ENCODE measurements at regions of chr2 and their contacts with region 1.

Region 1: GRCh38 chr2:97911206-97911921 is 84.4 kb downstream of the TMEM131 start:
- DNase-seq: peak; percentile 84
- ATAC-seq: peak; percentile 74
- H3K4me3 ChIP-seq: no peak overlapping the region
- H3K27ac ChIP-seq: peak overlapping the region; percentile 64
- H3K4me1 ChIP-seq: peaks cover 60% of the 10 kb centered on the region
- H3K27me3 ChIP-seq: no peaks in the 10 kb centered on the region
- CTCF ChIP-seq: no peak
- EP300 ChIP-seq: peak in 1 of 2 experiments; percentile 86; a peak in 3 of 4 replicates
- POLR2A ChIP-seq: no peak
- RAD21 ChIP-seq: peak; percentile 15; the same call in 1 of the 2 replicates

Region 2: DNA sequence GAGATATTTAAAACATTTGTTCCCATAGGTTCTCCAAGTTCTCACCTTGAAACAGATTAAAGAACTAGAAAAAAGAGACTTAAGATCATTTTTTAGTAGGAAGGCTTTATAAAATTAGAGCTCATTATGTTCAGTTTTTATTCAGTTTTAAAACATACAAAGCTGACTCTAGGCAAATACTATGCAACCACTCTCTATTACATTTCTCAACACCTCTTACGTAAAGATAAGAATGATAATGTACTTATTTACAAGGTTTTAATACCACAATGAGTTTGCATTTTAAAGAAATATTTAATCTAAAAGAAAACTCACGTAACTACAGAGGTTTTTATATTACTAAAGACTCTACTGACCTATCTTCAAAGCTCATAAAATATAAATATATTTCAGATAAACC is 15.6 kb after region 1 on chr2:
- CTCF ChIA-PET with region 1: interaction called, 8 read pairs
- POLR2A ChIA-PET with region 1: interaction called, 13 read pairs
- RAD21 ChIA-PET with region 1: interaction called, 36 read pairs
- SMC1A ChIA-PET with region 1: interaction called, 55 read pairs
- in situ Hi-C with region 1: no loop called
- intact Hi-C with region 1: loop called (anchors 2 kb)
- DNase-seq: no peak
- ATAC-seq: no peak
- H3K4me3 ChIP-seq: no peak overlapping the region
- H3K27ac ChIP-seq: no peak overlapping the region
- H3K4me1 ChIP-seq: peaks cover 14% of the 10 kb centered on the region
- H3K27me3 ChIP-seq: no peaks in the 10 kb centered on the region
- CTCF ChIP-seq: no peak
- EP300 ChIP-seq: no peak
- POLR2A ChIP-seq: no peak
- RAD21 ChIP-seq: no peak

Region 3: GRCh38 chr2:97957432-97958186 is 46.2 kb after region 1 on chr2:
- CTCF ChIA-PET with region 1: interaction called, 3 read pairs
- POLR2A ChIA-PET with region 1: interaction called, 4 read pairs
- RAD21 ChIA-PET with region 1: interaction called, 8 read pairs
- SMC1A ChIA-PET with region 1: interaction called, 16 read pairs
- in situ Hi-C with region 1: no loop called
- intact Hi-C with region 1: loop called (anchors 2 kb)
- DNase-seq: no peak
- ATAC-seq: peak; percentile 58
- H3K4me3 ChIP-seq: peak overlapping the region; percentile 39; the same call in 1 of the 2 replicates
- H3K27ac ChIP-seq: 0 out of 2 replicates have a peak overlapping the region, but pooled peaks have one; percentile 10
- H3K4me1 ChIP-seq: peaks cover 34% of the 10 kb centered on the region
- H3K27me3 ChIP-seq: no peaks in the 10 kb centered on the region
- CTCF ChIP-seq: no peak
- EP300 ChIP-seq: no peak
- POLR2A ChIP-seq: no peak
- RAD21 ChIP-seq: no peak

Region 4: GRCh38 chr2:98580656-98581284 is 669.4 kb after region 1 on chr2:
- CTCF ChIA-PET with region 1: no interaction called
- POLR2A ChIA-PET with region 1: no interaction called
- RAD21 ChIA-PET with region 1: no interaction called
- SMC1A ChIA-PET with region 1: no interaction called
- in situ Hi-C with region 1: no loop called
- intact Hi-C with region 1: no loop called
- DNase-seq: no peak
- ATAC-seq: peak; percentile 40; the same call in 2 of the 3 replicates
- H3K4me3 ChIP-seq: no peak overlapping the region
- H3K27ac ChIP-seq: no peak overlapping the region
- H3K4me1 ChIP-seq: peaks cover 8% of the 10 kb centered on the region; the same call in 1 of the 2 replicates
- H3K27me3 ChIP-seq: no peaks in the 10 kb centered on the region
- CTCF ChIP-seq: no peak
- EP300 ChIP-seq: no peak
- POLR2A ChIP-seq: no peak
- RAD21 ChIP-seq: 0 out of 2 replicates have a peak, but pooled peaks have one; percentile 4

Measured in GM12878 (cell line).